Tibial artery (tissue), 4 donors: ENCODE measurements at regions of chr14 and their contacts with region 1.

Region 1: GRCh38 chr14:90513161-90514014 is 116.6 kb downstream of the CALM1 start:
- DNase-seq: peak in 1 of 2 donors; percentile 84
- H3K4me3 ChIP-seq: no peak overlapping the region
- H3K27ac ChIP-seq: peak overlapping the region in 1 of 2 donors; percentile 48
- H3K4me1 ChIP-seq: peaks cover 0 to 34% (median 13%) of the 10 kb centered on the region in 4 donors
- H3K27me3 ChIP-seq: no peaks in the 10 kb centered on the region
- CTCF ChIP-seq: no peak

Region 2: GRCh38 chr14:90256354-90257131 is 256.8 kb before region 1 on chr14 and contains the start of gene PSMC1:
- intact Hi-C with region 1: no loop called
- DNase-seq: peak; percentile 88 to 94
- H3K4me3 ChIP-seq: peak within 1 kb of the TSS; percentile 91 to 95
- H3K27ac ChIP-seq: peak within 1 kb of the TSS; percentile 85 to 91
- H3K4me1 ChIP-seq: peaks cover 0 to 25% (median 15%) of the 10 kb centered on the region in 4 donors
- H3K27me3 ChIP-seq: no peaks in the 10 kb centered on the region
- CTCF ChIP-seq: peak in 1 of 2 experiments; percentile 24

Region 3: DNA sequence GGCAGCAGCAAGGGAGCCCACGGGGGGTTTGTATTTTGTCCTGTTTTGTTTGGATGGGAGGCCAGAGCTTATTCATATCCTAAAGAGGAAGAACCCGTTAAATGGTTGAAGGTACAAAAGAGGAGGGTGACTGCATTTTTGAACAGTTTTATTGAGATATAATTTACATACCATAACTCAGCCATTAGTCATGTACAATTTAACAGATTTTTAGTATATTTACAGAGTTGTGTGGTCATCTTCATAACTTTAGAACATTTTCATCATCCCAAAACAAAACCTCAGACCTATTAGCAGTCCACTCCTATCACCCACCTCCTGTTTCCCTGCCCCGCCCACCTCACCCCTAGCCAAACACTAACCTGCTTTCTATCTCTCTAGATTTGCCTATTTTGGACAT is 194.2 kb before region 1 on chr14:
- intact Hi-C with region 1: no loop called
- DNase-seq: no peak
- H3K4me3 ChIP-seq: no peak overlapping the region
- H3K27ac ChIP-seq: no peak overlapping the region
- H3K4me1 ChIP-seq: peaks cover 0 to 5% (median 0%) of the 10 kb centered on the region in 4 donors
- H3K27me3 ChIP-seq: no peaks in the 10 kb centered on the region
- CTCF ChIP-seq: no peak

Region 4: DNA sequence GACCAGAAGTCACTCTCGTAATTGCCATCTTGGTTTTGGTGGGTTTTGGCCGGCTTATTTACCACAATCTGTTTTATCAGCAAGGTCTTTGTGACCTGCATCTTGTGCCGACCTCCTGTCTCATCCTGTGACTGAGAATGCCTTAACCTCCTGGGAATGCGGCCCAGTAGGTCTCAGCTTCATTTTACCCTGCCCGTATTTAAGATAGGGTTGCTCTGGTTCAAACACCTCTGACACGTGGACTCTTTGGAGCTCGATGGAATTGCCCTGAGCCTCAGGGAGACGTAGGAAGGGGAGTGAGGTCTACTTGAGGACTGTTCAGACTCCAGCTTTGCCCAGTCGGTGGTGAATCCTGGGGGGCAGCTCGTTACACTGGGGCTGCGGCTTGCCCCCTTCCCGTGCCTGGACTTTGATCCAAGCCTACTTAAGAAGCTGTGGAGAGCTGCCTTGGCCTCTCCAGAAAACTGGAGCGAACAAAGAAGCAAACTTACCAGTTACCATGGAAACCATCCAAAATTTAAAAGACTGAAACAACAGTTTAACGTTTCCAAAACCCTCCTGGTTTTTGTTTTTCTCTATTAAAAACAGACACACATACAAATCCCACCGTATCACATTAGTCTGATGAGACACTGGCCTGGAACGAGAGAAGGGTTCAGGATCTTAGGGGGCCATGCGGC is 88.6 kb before region 1 on chr14:
- intact Hi-C with region 1: loop called (anchors 5 kb)
- DNase-seq: no peak
- H3K4me3 ChIP-seq: no peak overlapping the region
- H3K27ac ChIP-seq: no peak overlapping the region
- H3K4me1 ChIP-seq: peaks cover 0 to under 1% (median 0%) of the 10 kb centered on the region in 4 donors
- H3K27me3 ChIP-seq: no peaks in the 10 kb centered on the region
- CTCF ChIP-seq: no peak

Region 5: DNA sequence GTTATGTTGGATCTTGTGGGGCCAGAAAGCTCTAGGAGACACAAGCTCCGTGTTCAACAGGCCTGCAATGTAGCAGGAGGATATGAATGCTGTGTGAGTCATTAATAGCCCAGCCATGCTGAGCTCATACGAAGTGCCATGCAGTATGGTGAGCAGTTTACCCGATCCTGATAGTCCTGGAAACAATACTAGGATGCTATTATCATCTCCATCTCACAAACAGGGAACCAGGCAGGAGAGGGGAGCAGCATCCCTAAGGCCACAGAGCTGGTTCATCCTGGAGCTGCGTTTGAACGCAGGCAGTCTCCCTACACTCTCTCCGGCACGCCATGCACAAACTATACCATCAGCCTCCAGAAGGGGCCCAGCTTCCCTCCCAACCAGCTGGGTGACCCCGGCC is 282.4 kb after region 1 on chr14:
- intact Hi-C with region 1: no loop called
- DNase-seq: no peak
- H3K4me3 ChIP-seq: no peak overlapping the region
- H3K27ac ChIP-seq: no peak overlapping the region
- H3K4me1 ChIP-seq: no peaks in the 10 kb centered on the region
- H3K27me3 ChIP-seq: no peaks in the 10 kb centered on the region
- CTCF ChIP-seq: no peak